Prostate gland (tissue), 2 donors: ENCODE measurements at regions of chr11 and their contacts with region 1.

Region 1: GRCh38 chr11:62860835-62861563 is 19.7 kb upstream of the SLC3A2 start:
- DNase-seq: no peak
- H3K4me3 ChIP-seq: no peak overlapping the region
- H3K27ac ChIP-seq: peak overlapping the region; percentile 59 to 75
- H3K4me1 ChIP-seq: peaks cover 16% of the 10 kb centered on the region
- H3K27me3 ChIP-seq: no peaks in the 10 kb centered on the region
- CTCF ChIP-seq: no peak
- POLR2A ChIP-seq: no peak

Region 2: GRCh38 chr11:62787005-62787759 is 73.8 kb before region 1 on chr11 and contains the start of gene TMEM179B:
- intact Hi-C with region 1: loop called (anchors 2 kb)
- DNase-seq: peak; percentile 99
- H3K4me3 ChIP-seq: peak within 1 kb of the TSS; percentile 90 to 93
- H3K27ac ChIP-seq: peak within 1 kb of the TSS; percentile 94 to 98
- H3K4me1 ChIP-seq: peaks cover 20% of the 10 kb centered on the region
- H3K27me3 ChIP-seq: no peaks in the 10 kb centered on the region
- CTCF ChIP-seq: peak in 3 of 4 experiments; percentile 34 to 77 (median 59)
- POLR2A ChIP-seq: peak; percentile 98
- total RNA-seq, gene TMEM179B: 139 to 200 TPM

Region 3: DNA sequence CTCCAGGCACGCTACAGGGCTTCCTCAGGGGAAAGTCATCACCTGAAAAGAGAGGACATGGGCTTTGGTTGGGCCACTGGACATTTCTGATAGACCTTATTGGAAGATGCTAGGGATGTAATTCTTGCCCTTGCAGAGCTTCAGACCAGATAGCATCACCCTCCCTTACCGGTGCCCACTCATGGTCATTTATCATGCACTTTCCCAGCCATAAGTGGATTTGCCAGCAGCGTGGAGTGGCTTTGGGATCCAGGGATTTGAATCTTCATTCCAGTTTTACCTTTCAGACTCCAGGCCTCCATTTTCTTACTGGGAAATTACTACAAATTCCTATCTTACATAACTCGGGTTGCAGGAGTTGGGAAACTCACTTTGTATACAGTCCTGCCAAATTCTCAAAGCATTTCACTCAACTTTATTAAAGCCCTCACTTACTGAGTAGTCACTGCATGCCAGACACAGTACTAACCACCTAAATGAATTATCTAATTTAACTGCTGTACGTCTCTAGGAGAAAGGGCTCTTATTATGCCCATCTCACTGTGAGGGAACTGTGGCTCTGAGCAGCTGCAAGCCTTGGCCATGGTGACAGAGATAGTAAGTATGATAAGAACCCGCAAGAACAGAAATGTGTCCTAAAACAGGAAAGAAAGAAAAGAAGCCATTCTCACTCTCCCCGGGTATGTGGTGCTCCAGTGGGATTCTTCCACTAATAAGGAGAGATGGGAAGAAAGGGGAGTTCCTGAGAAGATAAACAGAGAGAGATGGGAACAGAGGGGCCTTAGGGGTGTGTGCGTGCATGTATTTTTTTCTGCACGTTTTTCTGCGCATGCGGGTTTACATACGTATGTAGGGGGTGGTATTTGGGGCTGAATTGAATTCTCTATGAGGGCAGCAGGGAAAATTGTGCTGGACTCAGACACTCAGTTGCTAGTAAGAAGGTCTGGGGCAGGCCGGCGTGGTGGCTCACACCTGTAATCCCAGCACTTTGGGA is 50.4 kb after region 1 on chr11:
- intact Hi-C with region 1: no loop called
- DNase-seq: no peak
- H3K4me3 ChIP-seq: no peak overlapping the region
- H3K27ac ChIP-seq: no peak overlapping the region
- H3K4me1 ChIP-seq: peaks cover 15% of the 10 kb centered on the region
- H3K27me3 ChIP-seq: no peaks in the 10 kb centered on the region
- CTCF ChIP-seq: no peak
- POLR2A ChIP-seq: no peak